Head of caudate nucleus (tissue), 42 donors: ENCODE measurements at regions of chr19 and their contacts with region 1.

Region 1: GRCh38 chr19:42529248-42529764 is 1.0 kb upstream of the CEACAM1 start:
- DNase-seq: peak in 41 of 42 donors; percentile 18 to 90 (median 73)

Region 2: DNA sequence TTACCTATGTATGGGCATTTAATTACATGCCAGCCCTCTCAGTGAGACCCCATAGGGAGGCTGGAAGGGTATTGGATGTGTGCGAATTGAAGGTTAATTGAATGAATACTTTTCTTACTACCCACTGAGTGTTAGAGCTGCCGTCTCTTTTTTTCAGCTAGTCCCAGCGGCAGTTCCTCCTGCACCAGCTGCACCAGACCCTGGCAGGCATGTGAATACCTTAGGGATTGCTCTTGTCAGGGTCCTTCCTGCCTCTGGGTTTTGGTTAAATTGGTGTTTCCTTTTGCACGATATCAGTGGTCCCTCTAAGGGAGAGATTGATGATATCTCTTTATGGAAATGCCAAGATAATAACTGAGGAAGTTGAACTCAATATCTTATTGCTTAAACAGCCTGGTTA is 76.7 kb before region 1 on chr19:
- intact Hi-C with region 1: loop called (anchors 2 kb)
- DNase-seq: no peak

Region 3: DNA sequence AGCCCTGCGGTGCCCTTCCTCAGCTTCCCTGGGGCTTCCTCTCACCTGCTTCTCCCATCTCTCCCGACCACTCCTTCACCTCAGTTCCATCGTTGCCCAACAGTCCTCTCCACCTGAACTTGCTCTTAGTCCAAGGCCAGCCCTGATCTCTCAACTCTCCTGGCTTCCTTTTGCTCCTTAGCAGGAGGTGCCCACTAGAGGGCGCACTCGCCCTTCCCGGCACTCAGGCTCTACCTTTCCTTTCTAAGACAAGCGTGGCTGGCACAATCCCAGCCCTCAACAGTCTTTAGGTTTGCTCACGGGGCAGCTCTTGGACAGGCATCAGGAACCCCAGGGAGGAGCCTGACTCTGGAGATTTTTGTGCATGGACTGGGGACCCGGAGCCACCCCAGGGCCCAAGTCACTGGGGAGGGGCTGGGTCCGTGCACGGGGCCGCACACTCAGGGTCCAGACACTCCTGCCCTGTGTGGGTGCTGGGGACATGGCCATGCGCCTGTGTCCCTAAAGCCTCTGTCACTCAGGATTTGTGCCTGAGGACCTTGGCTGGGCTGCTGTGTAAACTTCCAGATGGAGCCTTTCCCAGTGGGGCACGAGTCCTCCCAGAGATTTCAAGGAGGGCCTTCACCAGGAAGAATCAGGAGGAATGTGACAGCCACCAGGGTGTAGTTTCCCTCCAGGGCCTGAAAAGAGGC is 77.5 kb after region 1 on chr19:
- intact Hi-C with region 1: no loop called
- DNase-seq: peak; percentile 8 to 82 (median 56)

Region 4: GRCh38 chr19:42850981-42851717 is 321.8 kb after region 1 on chr19:
- intact Hi-C with region 1: no loop called
- DNase-seq: peak in 11 of 42 donors; percentile 20 to 71 (median 38)